ENCODE measurements at regions of chr6 and their contacts with region 1.

Region 1: GRCh38 chr6:35522660-35523658 is 10.3 kb upstream of the TULP1 start:
- DNase-seq: peak; percentile 91
- ATAC-seq: peak; percentile 87
- H3K4me3 Mint-ChIP-seq: peak overlapping the region; percentile 41
- H3K27ac Mint-ChIP-seq: no peak overlapping the region
- H3K4me1 Mint-ChIP-seq: peaks cover 19% of the 10 kb centered on the region
- H3K27me3 Mint-ChIP-seq: no peaks in the 10 kb centered on the region; the same call in 1 of the 2 replicates
- CTCF ChIP-seq: peak; percentile 99

Region 2: DNA sequence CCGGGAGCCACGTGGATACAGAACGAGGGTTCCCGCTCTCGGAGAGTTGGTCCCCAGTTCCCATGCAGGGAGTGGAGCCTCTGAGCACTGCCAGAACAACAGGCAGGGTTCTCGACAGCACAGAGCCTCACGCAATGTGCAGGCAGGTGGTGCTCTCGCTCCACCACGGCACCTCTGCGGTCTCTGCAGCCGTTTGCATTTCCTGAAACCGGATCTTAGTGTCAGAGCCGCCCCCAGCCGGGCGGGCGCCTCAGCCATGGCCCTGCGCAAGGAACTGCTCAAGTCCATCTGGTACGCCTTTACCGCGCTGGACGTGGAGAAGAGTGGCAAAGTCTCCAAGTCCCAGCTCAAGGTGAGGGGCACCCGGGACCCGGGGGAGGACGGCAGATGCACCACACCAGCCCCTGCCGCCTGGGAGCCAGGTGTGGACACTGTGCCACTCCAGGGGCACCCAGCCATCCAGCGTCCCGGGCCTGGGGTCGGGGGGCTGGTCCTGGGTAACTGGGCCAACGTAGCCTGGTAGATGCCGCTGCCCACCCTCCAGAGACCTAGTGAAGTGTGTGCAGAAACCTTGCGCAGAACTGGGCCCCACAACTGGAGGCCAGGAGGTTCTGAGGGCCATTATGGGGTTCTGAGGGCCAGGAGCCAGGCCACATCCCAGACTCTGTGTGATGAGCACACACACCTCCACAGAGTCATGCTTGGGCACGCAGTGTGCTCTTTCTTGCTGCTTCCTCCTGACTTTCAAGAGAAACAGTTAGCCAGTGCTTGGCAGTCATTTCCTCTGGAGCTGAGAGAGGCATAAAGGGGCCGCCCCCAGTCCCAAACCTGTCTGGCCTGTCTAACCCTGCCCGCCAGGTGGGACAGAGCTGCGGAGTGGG is 225.1 kb before region 1 on chr6 and contains the start of gene DEF6:
- CTCF ChIA-PET with region 1: interaction called, 13 read pairs
- POLR2A ChIA-PET with region 1: no interaction called
- DNase-seq: peak; percentile 90
- ATAC-seq: peak; percentile 94
- H3K4me3 Mint-ChIP-seq: peak within 1 kb of the TSS; percentile 46
- H3K27ac Mint-ChIP-seq: 0 out of 2 replicates have a peak within 1 kb of the TSS, but pooled peaks have one; percentile 41
- H3K4me1 Mint-ChIP-seq: peaks cover 35% of the 10 kb centered on the region
- H3K27me3 Mint-ChIP-seq: 0 out of 2 replicates have a peak, but pooled peaks cover 4% of the 10 kb centered on the region
- CTCF ChIP-seq: no peak; the same call in 1 of the 2 replicates
- total RNA-seq, gene DEF6: 11.3 to 12.8 TPM (median 11.4 TPM) in 3 replicates

Region 3: DNA sequence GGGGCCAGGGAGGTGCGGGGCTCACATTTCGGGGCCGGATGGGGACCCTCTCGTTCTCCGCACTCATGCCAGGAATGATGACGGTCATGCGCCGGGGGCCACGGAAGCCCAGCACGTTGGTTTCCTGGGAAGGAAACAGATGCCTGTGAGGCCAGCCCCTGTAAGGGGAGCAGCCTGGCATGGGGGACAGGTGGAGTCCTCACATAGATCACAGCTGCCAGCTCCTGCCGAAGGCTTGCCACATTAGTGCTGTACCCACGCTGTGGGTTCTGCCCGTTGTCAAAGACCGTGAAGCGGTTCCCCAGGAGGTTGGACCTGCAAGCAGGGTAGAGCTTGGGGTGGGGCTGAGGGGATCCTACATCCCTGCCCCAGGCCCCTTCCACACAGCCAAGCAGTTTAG is 19.4 kb before region 1 on chr6:
- CTCF ChIA-PET with region 1: interaction called, 40 read pairs
- POLR2A ChIA-PET with region 1: no interaction called
- DNase-seq: no peak
- ATAC-seq: no peak
- H3K4me3 Mint-ChIP-seq: no peak overlapping the region
- H3K27ac Mint-ChIP-seq: no peak overlapping the region
- H3K4me1 Mint-ChIP-seq: peaks cover 50% of the 10 kb centered on the region
- H3K27me3 Mint-ChIP-seq: peaks cover 32% of the 10 kb centered on the region
- CTCF ChIP-seq: no peak

Region 4: DNA sequence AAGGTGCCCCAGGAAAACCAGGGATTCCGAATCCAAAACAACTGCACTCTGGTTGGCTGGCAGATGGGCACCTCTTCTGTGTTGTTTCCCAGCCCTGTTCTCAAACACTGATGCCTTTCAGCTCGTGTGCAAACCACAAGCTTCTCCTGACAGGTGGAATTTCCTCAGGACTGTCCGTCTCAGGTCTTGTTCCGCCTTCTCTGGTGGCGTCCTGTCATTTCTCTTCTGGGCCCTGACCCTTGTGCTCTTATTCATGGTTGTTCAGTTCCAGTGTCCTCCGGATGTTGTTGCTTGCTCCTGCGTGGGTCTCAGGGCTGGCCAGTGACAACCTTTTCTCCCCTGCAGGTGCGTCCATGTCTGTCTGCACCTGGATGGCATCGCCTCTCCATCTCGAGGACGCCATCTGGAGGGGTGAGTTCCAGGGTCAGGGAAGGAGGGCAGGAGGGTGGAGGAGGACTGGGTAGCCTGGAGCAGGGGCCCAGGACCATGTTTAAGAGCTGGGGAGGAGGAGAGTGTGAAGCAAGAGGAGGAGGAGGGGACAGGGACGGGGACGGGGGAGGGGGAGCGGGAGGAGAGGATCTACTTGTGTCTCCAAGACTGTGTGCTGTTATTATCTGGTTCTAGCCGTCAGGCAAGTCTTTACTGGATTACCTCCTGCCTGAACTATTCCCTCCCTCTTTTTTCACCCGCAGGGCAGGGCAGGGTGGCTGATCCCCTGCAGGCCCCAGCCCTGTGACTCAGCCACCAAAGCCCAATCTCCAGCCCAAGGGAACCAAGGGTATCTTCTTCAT is 21.8 kb after region 1 on chr6:
- CTCF ChIA-PET with region 1: interaction called, 147 read pairs
- POLR2A ChIA-PET with region 1: interaction called, 3 read pairs
- DNase-seq: no peak
- ATAC-seq: peak; percentile 43
- H3K4me3 Mint-ChIP-seq: no peak overlapping the region
- H3K27ac Mint-ChIP-seq: no peak overlapping the region
- H3K4me1 Mint-ChIP-seq: peaks cover 25% of the 10 kb centered on the region
- H3K27me3 Mint-ChIP-seq: no peaks in the 10 kb centered on the region
- CTCF ChIP-seq: no peak

Region 5: DNA sequence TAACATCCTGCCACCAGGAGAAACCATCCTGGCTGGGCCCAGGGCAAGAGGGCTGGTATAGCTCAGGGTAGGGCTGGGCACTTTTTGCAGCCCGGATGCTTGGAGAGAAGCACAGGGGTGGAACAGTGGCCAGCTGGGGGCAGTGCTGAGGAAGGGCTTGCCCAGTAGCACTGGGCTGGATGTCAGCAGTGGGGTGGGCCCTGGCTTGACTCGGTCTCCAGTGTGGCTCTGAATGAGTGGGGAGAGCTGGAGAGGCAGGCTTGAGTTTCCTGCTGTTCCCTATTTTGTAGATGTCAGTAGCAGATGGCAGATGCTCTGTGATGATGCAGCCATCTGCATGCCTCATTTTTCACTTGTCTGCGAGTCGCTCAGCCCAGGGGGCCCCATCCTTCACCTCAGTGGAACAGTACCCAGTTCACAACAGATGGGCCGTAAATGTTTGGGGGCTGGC is 46.1 kb after region 1 on chr6:
- CTCF ChIA-PET with region 1: interaction called, 31 read pairs
- POLR2A ChIA-PET with region 1: no interaction called
- DNase-seq: peak; percentile 66
- ATAC-seq: peak; percentile 95
- H3K4me3 Mint-ChIP-seq: no peak overlapping the region
- H3K27ac Mint-ChIP-seq: no peak overlapping the region
- H3K4me1 Mint-ChIP-seq: peaks cover 15% of the 10 kb centered on the region
- H3K27me3 Mint-ChIP-seq: no peaks in the 10 kb centered on the region
- CTCF ChIP-seq: peak; percentile 45

Region 6: DNA sequence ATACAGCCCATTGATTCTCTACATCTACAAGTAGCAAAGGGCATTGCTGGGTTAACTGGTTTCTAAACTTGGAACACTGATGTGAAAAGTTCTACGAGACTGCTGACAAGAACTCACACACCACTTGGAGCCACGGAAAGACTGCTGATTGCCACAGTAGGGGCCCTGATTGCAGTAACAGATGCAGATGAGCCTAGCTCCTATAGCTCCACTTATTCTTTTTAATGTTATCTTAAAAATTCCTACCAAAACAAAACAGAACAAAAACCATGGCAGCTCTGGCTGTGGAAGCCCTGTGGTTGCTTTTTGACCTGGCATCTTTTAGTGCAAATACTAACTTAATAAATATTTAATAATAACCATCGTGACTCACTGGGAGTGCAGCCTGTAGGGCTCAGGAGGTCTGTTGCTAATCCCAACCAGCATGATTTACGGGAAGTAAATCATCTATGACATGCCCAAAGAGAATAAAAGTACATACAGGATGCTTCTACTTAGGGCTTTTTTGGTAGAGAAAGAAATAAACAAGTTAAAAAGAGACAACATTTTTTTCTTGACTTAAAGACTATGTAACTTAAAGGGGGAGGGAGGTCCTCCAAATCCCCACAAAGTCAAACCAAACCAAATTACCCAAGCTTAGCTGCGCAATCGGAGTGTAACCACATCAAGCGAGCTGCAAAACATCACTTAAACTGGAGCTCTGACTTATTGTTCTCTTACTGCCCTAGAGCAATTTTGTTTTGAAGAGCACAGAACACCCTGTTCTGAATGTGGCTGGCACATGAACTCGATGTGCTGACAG is 78.6 kb after region 1 on chr6:
- CTCF ChIA-PET with region 1: interaction called, 11 read pairs
- POLR2A ChIA-PET with region 1: no interaction called
- DNase-seq: no peak
- ATAC-seq: peak; percentile 78
- H3K4me3 Mint-ChIP-seq: no peak overlapping the region
- H3K27ac Mint-ChIP-seq: peak overlapping the region; percentile 78
- H3K4me1 Mint-ChIP-seq: peaks cover 28% of the 10 kb centered on the region
- H3K27me3 Mint-ChIP-seq: no peaks in the 10 kb centered on the region
- CTCF ChIP-seq: no peak

Measured in WTC11 (cell line).